Tibial artery (tissue), 4 donors: ENCODE measurements at regions of chr9 and their contacts with region 1.

Region 1: DNA sequence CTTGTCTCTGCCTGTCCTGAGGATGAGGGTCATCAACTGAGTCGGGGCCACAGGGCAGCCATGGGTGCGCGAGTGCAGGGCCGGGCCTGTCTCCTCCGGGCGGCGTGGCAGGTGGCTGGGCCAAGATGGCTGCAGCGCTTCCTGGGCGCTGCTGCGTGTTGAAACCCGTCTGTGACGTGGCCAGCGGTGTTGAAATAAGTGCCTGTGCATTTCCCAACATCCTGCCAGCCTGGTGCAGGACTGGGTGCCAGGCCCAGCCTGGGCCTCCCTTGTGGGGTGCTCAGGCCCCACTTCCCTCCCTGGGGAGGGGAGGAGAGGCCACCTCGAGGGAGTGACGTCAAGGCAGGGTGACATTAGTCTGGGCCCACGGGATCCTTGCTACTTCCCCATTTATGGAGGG is 45.5 kb downstream of the RXRA start:
- DNase-seq: peak; percentile 72 to 86
- H3K4me3 ChIP-seq: no peak overlapping the region
- H3K27ac ChIP-seq: peak overlapping the region; percentile 21 to 29
- H3K4me1 ChIP-seq: peaks cover 20 to 90% (median 71%) of the 10 kb centered on the region in 4 donors
- H3K27me3 ChIP-seq: no peaks in the 10 kb centered on the region
- CTCF ChIP-seq: no peak

Region 2: DNA sequence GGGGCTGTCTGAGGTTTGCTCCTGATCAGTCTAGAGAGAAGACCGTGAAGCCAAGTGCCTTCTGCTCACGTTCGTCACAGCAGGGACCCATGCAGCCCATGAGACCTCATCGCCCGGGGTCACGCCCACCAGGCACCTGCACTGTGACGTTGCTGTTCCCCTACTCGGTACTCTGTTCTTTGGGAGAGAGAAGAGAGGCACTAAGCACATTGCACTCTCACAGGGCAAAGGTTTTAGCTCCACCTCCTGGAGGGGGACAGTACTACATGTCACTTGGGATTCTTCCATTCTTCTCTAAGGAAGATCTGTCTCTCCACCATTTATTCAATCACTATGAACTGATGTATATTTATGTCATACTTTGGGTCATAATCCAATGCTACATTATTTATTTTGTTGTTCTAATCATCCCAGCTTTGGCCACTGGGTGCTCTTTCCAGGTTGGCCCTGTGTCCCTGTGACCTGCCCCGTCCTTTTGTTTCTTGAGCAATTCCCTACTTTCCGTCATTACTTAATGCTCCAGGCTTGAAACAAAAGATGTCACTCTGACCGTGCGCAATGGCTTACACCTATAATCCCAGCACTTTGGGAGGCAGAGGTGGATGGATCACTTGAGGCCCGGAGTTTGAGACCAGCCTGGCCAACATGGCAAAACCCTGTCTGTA is 272.5 kb before region 1 on chr9:
- intact Hi-C with region 1: no loop called
- DNase-seq: no peak
- H3K4me3 ChIP-seq: no peak overlapping the region
- H3K27ac ChIP-seq: no peak overlapping the region
- H3K4me1 ChIP-seq: no peaks in the 10 kb centered on the region
- H3K27me3 ChIP-seq: peaks cover 0 to 25% of the 10 kb centered on the region in 2 donors
- CTCF ChIP-seq: peak; percentile 32 to 36

Region 3: DNA sequence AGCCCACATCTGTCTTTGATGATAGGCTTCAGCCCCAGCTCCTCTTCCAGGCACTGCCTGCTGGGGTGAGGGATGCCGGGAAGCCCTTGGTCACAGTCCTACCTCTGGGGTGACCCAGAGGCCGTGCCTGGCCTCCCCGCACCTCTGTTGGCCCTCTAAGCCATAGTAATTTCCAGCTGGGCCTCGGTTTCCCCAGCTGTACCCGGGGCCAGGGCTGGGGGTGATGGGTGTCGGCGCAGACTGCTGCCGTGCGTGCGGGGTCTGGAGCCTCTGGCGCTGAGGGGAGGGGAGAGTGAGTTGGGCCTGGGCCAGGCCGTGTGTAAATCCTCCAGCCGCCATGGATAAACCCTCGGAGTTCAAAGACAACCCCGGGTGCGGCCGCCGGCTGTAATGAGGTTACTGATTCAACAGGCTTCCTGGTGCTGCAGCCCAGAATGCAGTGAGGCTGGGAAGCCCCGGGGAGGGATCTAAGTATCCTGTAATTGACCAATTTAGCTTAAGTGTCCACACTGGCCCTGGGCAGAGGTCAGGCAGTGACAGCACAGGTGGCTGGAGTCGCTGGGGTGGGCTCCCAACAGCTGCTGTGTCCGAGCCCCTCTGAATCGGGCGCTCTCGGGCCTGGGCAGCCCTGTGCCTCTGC is 38.4 kb before region 1 on chr9:
- intact Hi-C with region 1: loop called (anchors 5 kb)
- DNase-seq: no peak
- H3K4me3 ChIP-seq: no peak overlapping the region
- H3K27ac ChIP-seq: no peak overlapping the region
- H3K4me1 ChIP-seq: peaks cover 5 to 100% (median 92%) of the 10 kb centered on the region in 4 donors
- H3K27me3 ChIP-seq: no peaks in the 10 kb centered on the region
- CTCF ChIP-seq: no peak